CD4-positive, alpha-beta T cell (primary cell): ENCODE measurements at regions of chr17 and their contacts with region 1.

Region 1: GRCh38 chr17:50087246-50087911 is 7.8 kb upstream of the PDK2 start:
- DNase-seq: peak; percentile 50 to 84 (median 71)
- ATAC-seq: peak; percentile 89
- H3K4me3 ChIP-seq: no peak overlapping the region
- H3K4me3 Mint-ChIP-seq: no peak overlapping the region
- H3K27ac ChIP-seq: no peak overlapping the region
- H3K27ac Mint-ChIP-seq: no peak overlapping the region
- H3K4me1 ChIP-seq: peaks cover 3% of the 10 kb centered on the region
- H3K4me1 Mint-ChIP-seq: no peaks in the 10 kb centered on the region
- H3K27me3 ChIP-seq: no peaks in the 10 kb centered on the region
- H3K27me3 Mint-ChIP-seq: no peaks in the 10 kb centered on the region
- CTCF ChIP-seq: peak; percentile 99

Region 2: DNA sequence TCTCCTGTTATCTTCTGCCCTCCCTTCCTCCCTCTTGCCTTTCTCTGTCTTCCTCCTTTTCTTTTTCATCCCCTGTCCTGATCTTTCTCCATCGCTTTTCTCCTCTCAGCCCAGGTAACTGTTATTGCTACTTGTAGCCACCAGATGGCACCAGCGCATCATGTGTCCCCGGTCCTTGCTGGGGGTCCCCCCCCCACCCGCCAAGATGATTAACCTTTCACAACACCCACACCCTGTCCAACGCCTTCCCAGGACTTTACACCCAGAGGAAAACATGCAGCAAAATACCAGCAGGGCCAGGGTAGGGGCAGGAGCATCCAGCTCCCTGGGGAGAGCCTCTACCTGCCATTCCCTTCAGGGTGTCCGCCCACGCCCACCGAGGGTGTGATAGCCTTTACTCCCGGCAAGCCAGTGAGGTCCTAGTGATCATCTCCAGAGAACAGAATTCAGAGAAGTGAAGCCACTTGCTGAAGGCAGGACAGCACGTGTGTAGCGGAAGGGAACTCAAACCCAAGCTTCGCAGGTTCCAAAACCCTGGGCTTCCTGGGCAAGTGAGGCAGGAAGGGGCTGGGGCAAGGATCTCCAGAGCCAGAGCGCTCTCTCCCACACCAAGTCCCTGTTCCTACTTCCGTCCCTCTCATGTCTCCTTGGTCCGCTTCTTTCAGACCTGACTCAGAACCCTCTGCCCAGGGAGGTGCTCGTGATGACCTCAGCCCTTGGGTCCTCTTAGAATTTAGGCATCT is 226.1 kb before region 1 on chr17:
- CTCF ChIA-PET with region 1: interaction called, 3 read pairs
- POLR2A ChIA-PET with region 1: no interaction called
- intact Hi-C with region 1: loop called (anchors 1 to 2 kb)
- DNase-seq: peak; percentile 28 to 83 (median 43)
- ATAC-seq: peak; percentile 80
- H3K4me3 ChIP-seq: no peak overlapping the region
- H3K4me3 Mint-ChIP-seq: no peak overlapping the region
- H3K27ac ChIP-seq: no peak overlapping the region
- H3K27ac Mint-ChIP-seq: no peak overlapping the region
- H3K4me1 ChIP-seq: peaks cover 6% of the 10 kb centered on the region
- H3K4me1 Mint-ChIP-seq: no peaks in the 10 kb centered on the region
- H3K27me3 ChIP-seq: peaks cover 0 to 10% of the 10 kb centered on the region in 2 experiments
- H3K27me3 Mint-ChIP-seq: peaks cover 6% of the 10 kb centered on the region
- CTCF ChIP-seq: peak; percentile 93

Region 3: GRCh38 chr17:50055426-50056230 is 31.8 kb before region 1 on chr17 and contains the start of gene ITGA3:
- CTCF ChIA-PET with region 1: interaction called, 10 read pairs
- POLR2A ChIA-PET with region 1: interaction called, 3 read pairs
- intact Hi-C with region 1: loop called in 1 of 2 experiments (anchors 5 kb)
- DNase-seq: peak; percentile 14 to 81 (median 58)
- ATAC-seq: peak; percentile 58
- H3K4me3 ChIP-seq: peak within 1 kb of the TSS; percentile 78
- H3K4me3 Mint-ChIP-seq: peak within 1 kb of the TSS; percentile 93
- H3K27ac ChIP-seq: peak within 1 kb of the TSS; percentile 21 to 23
- H3K27ac Mint-ChIP-seq: peak within 1 kb of the TSS; percentile 62
- H3K4me1 ChIP-seq: peaks cover 27% of the 10 kb centered on the region
- H3K4me1 Mint-ChIP-seq: peaks cover 30% of the 10 kb centered on the region
- H3K27me3 ChIP-seq: no peaks in the 10 kb centered on the region
- H3K27me3 Mint-ChIP-seq: no peaks in the 10 kb centered on the region
- CTCF ChIP-seq: no peak
- total RNA-seq, gene ITGA3: 2.3 to 2.4 TPM

Region 4: DNA sequence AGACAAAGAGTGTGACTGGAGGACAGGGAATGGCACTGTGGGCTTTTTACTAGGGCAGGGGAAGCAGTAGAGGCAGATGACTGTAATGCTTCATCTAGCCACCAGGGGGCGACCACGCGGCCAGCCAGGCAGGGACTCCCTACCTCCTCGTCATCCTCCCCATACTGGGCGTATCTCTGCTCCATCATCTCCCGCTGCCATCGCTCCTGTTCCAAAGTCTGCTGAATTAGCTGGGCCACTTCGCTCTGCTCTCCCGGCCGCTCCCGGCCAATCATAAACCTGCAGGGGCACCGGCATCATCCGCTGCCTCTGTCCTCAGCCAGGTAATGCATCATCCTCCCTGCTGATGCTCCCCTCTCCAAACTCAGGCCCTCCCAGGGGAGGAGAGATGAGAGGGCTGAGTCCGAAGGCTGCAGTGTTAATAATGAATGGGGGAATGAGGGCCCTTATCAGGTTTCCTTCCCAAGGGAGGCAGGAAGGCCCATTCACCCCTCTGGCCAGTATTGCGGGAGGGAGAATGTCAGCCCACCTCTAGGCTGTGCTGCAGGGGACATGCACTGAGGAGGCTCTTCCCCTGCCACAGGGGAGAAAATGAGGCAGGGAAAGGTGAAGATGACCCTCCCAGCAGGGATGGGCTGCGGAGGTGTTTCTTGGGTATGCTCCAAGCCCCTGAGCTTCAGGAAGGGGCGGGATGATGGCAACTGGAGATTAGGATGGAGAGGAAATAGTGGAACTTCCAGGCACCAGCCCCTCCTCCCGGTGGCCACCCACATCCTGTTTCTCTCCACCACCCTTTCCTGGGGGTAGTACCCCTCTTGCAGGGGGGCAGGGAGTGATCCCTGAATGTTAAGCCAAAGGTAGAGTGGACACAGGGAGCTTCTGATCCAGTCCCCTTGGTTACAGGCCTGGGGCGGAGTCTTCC is 52.8 kb after region 1 on chr17:
- CTCF ChIA-PET with region 1: no interaction called
- POLR2A ChIA-PET with region 1: no interaction called
- intact Hi-C with region 1: no loop called
- DNase-seq: peak; percentile 71 to 89 (median 78)
- ATAC-seq: peak; percentile 91
- H3K4me3 ChIP-seq: peak overlapping the region; percentile 17
- H3K4me3 Mint-ChIP-seq: peak overlapping the region; percentile 57
- H3K27ac ChIP-seq: peak overlapping the region in 1 of 2 donors; percentile 49
- H3K27ac Mint-ChIP-seq: peak overlapping the region; percentile 76
- H3K4me1 ChIP-seq: peaks cover 79% of the 10 kb centered on the region
- H3K4me1 Mint-ChIP-seq: peaks cover 67% of the 10 kb centered on the region
- H3K27me3 ChIP-seq: no peaks in the 10 kb centered on the region
- H3K27me3 Mint-ChIP-seq: no peaks in the 10 kb centered on the region
- CTCF ChIP-seq: peak; percentile 94